Psoas muscle (tissue), 8 donors: ENCODE measurements at regions of chr17 and their contacts with region 1.

Region 1: DNA sequence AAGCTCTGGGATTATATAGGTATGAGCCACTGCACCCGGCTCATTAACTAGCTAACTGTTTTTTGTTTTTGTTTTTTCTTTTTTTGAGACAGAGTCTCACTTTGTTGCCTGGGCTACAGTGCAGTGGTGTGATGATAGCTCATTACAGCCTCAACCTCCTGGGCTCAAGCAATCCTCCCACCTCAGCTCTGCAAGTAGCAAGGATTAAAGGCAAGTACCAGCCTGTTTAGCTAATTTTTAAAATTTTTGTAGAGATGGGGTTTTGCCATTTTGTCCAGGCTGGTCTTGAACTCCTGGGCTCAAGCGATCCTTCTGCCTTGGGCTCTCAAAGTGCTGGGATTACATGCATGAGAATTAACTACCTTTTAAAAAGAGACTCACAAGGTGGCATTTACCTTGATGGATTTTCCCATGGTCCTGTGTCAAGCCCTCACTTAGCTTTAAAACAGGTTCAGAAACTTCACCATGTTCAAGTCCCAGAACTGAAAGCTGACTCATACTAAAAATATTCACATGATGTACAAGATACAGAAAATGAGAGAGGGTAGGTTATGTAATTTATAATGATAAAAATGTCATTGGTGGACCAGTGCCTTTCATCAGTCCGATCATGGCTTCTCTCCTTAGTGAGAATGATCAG is 4.5 kb upstream of the AKAP1 start:
- DNase-seq: no peak
- ATAC-seq: no peak
- H3K4me3 ChIP-seq: no peak overlapping the region
- H3K27ac ChIP-seq: no peak overlapping the region
- H3K4me1 ChIP-seq: peaks cover 4% of the 10 kb centered on the region
- H3K27me3 ChIP-seq: no peaks in the 10 kb centered on the region
- CTCF ChIP-seq: no peak

Region 2: DNA sequence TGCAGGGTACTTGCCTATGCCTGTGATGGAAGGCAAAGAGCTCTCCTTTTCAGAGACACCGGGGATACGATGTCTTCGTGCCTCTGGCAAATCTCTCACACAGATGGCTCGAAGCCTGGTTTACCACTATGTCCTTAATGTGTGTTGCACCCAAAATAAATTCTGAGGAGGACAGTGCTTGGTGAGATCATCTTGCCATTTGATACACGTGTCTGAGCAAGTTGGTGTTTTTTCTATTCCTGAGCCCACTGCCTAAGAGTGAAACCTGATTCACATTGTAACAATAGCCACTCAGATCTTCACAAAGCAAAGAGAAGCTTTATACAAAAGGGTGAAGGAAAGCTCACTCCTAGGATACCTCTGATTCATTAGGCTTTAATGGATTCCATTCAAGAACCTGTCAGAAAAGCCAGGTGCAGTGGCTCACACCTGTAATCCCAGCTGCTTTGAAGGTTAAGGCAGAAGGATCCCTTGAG is 28.6 kb before region 1 on chr17:
- intact Hi-C with region 1: loop called in 1 of 2 experiments (anchors 2 kb)
- DNase-seq: peak in 1 of 2 donors; percentile 72
- ATAC-seq: peak; percentile 90 to 92 (median 92)
- H3K4me3 ChIP-seq: no peak overlapping the region
- H3K27ac ChIP-seq: peak overlapping the region; percentile 82
- H3K4me1 ChIP-seq: peaks cover 29% of the 10 kb centered on the region
- H3K27me3 ChIP-seq: no peaks in the 10 kb centered on the region
- CTCF ChIP-seq: no peak

Region 3: GRCh38 chr17:57121338-57122042 is 40.9 kb after region 1 on chr17:
- intact Hi-C with region 1: no loop called
- DNase-seq: no peak
- ATAC-seq: peak in 2 of 4 donors; percentile 40 to 56
- H3K4me3 ChIP-seq: no peak overlapping the region
- H3K27ac ChIP-seq: no peak overlapping the region
- H3K4me1 ChIP-seq: no peaks in the 10 kb centered on the region
- H3K27me3 ChIP-seq: no peaks in the 10 kb centered on the region
- CTCF ChIP-seq: peak; percentile 44